HCT116 (cell line): ENCODE measurements at regions of chr11 and their contacts with region 1.

Region 1: GRCh38 chr11:57493507-57494503 is 21.7 kb downstream of the SLC43A1 start:
- DNase-seq: peak; percentile 73
- ATAC-seq: peak; percentile 90
- H3K4me3 ChIP-seq: no peak overlapping the region
- H3K27ac ChIP-seq: peak overlapping the region; percentile 37; the same call in 1 of the 2 replicates
- H3K4me1 ChIP-seq: peaks cover 5 to 7% of the 10 kb centered on the region in 2 experiments; a peak in 2 of 4 replicates
- H3K27me3 ChIP-seq: no peaks in the 10 kb centered on the region
- CTCF ChIP-seq: peak; percentile 73 to 98 (median 87)
- POLR2A ChIP-seq: no peak
- RAD21 ChIP-seq: peak; percentile 78

Region 2: GRCh38 chr11:57456960-57457642 is 36.7 kb before region 1 on chr11:
- CTCF ChIA-PET with region 1: interaction called, 29 read pairs
- POLR2A ChIA-PET with region 1: interaction called, 8 read pairs
- RAD21 ChIA-PET with region 1: interaction called in 1 of 2 experiments, 3 read pairs
- intact Hi-C with region 1: no loop called
- DNase-seq: peak; percentile 79
- ATAC-seq: peak; percentile 71
- H3K4me3 ChIP-seq: peak overlapping the region in 1 of 2 experiments; percentile 67; a peak in 2 of 4 replicates
- H3K27ac ChIP-seq: no peak overlapping the region
- H3K4me1 ChIP-seq: peaks cover 16 to 42% of the 10 kb centered on the region in 2 experiments; a peak in 3 of 4 replicates
- H3K27me3 ChIP-seq: peaks cover 3% of the 10 kb centered on the region; the same call in 1 of the 2 replicates
- CTCF ChIP-seq: peak; percentile 89 to 99 (median 89)
- POLR2A ChIP-seq: no peak
- RAD21 ChIP-seq: peak; percentile 94

Region 3: GRCh38 chr11:57508341-57509170 is 14.8 kb after region 1 on chr11:
- CTCF ChIA-PET with region 1: interaction called, 25 read pairs
- POLR2A ChIA-PET with region 1: no interaction called
- RAD21 ChIA-PET with region 1: no interaction called
- intact Hi-C with region 1: no loop called
- DNase-seq: no peak
- ATAC-seq: no peak
- H3K4me3 ChIP-seq: no peak overlapping the region
- H3K27ac ChIP-seq: no peak overlapping the region
- H3K4me1 ChIP-seq: no peaks in the 10 kb centered on the region
- H3K27me3 ChIP-seq: no peaks in the 10 kb centered on the region
- CTCF ChIP-seq: no peak
- POLR2A ChIP-seq: no peak
- RAD21 ChIP-seq: no peak

Region 4: GRCh38 chr11:57530596-57531507 is 37.0 kb after region 1 on chr11 and contains the start of gene TIMM10:
- CTCF ChIA-PET with region 1: interaction called, 78 read pairs
- POLR2A ChIA-PET with region 1: interaction called, 9 read pairs
- RAD21 ChIA-PET with region 1: interaction called, 6 to 9 read pairs
- intact Hi-C with region 1: loop called (anchors 1 kb)
- DNase-seq: peak; percentile 99
- ATAC-seq: peak; percentile 95
- H3K4me3 ChIP-seq: peak within 1 kb of the TSS; percentile 64 to 84
- H3K27ac ChIP-seq: peak within 1 kb of the TSS; percentile 61
- H3K4me1 ChIP-seq: peaks cover 16 to 17% of the 10 kb centered on the region in 2 experiments
- H3K27me3 ChIP-seq: no peaks in the 10 kb centered on the region
- CTCF ChIP-seq: no peak
- POLR2A ChIP-seq: peak; percentile 75
- RAD21 ChIP-seq: peak; percentile 16; the same call in 1 of the 2 replicates
- total RNA-seq, gene TIMM10: 65.6 TPM

Region 5: DNA sequence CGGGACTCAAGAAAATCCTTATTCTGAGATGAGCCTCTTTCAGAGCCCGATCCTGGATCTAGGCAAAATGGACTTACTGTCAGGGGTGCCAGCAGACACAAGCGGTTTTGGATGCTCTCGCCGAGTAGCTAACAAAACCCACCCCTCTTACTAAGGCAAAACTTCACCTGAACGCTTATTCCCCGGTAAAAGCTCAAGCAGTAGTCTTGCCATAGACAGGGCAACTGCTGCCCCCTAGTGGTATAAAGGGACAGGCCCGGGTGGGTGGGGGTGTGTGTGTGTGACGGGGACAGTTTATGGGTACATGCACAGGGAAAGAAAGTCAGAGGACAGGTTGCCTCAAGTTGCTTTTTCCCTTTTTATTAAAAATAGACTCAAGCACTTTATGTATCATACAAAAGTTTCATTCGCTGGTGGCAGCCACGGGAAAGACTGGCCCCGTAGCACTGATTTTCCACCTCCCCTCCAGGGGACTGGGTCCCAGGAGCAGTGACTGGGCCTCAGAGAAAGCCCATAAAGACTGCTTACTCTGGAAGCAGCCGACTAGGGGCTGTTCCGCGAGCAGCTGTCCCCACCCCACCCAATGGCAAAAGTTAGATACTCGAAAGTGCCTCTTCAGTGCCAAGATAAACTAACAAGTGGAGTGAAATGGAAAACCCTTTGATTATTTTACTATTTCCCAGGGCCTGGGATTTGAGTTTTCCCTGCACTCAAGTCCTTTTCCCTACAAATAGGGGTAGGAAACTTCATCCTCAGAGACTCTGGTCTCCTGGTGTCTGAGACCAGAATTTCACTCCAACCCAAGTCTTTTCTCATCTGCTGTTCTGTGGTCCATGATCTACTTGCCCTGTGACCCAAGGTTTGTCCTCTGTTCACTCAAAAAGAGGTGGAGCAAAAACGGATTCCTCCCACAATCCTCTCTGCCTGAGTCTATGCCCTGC is 151.2 kb after region 1 on chr11:
- CTCF ChIA-PET with region 1: interaction called, 28 read pairs
- POLR2A ChIA-PET with region 1: interaction called, 6 read pairs
- RAD21 ChIA-PET with region 1: interaction called, 4 to 7 read pairs
- intact Hi-C with region 1: loop called (anchors 1 kb)
- DNase-seq: peak; percentile 71
- ATAC-seq: peak; percentile 88
- H3K4me3 ChIP-seq: no peak overlapping the region
- H3K27ac ChIP-seq: no peak overlapping the region
- H3K4me1 ChIP-seq: peaks cover 0 to 22% of the 10 kb centered on the region in 2 experiments; a peak in 3 of 4 replicates
- H3K27me3 ChIP-seq: peaks cover 12% of the 10 kb centered on the region; the same call in 1 of the 2 replicates
- CTCF ChIP-seq: peak; percentile 77 to 96 (median 90)
- POLR2A ChIP-seq: no peak
- RAD21 ChIP-seq: peak; percentile 79